K562 (cell line): ENCODE measurements at regions of chr3 and their contacts with region 1.

Region 1: DNA sequence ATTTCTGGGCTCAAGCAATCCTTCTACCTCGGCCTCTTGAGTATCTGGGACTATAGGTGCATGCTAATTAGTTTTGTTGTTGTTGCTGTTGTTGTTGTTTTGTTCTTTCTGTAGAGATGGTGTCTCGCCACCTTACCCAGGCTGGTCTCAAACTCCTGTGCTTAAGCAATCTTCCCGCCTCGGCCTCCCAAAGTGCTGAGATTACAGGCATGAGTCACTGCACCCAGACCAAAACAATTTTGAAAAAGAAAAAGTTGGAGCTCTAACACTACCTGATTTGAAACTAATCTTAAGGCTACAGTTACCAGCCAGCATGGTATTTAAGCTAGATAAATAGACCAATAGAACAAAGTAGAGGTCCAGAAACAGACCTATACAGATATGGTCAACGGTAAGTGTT is 29.8 kb downstream of the KPNA1 start:
- DNase-seq: peak in 1 of 4 experiments; percentile 25
- ATAC-seq: peak; percentile 58
- H3K4me3 ChIP-seq: no peak overlapping the region
- H3K27ac ChIP-seq: no peak overlapping the region
- H3K4me1 ChIP-seq: no peaks in the 10 kb centered on the region; a peak in 2 of 5 replicates
- H3K27me3 ChIP-seq: no peaks in the 10 kb centered on the region
- CTCF ChIP-seq: no peak
- EP300 ChIP-seq: no peak; the same call in 1 of the 2 replicates
- POLR2A ChIP-seq: no peak
- RAD21 ChIP-seq: no peak

Region 2: DNA sequence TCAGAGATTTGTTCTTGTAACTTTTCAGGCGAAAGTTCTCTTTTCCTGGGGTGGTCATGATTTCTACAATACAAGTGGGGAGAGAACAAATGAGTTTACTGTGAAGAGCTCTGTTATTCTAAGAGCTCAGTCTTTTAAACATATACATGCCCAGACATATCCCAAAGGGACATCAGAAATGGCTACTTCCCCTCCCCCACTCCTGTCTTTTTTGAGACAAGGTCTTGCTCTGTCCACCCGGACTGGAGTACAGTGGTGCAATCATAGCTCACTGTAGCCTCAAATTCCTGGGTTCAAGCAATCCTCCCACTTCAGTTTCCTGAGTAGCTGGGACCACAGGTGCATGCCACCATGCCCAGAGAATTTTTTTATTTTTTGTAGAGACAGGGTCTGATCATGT is 11.5 kb after region 1 on chr3:
- CTCF ChIA-PET with region 1: no interaction called
- POLR2A ChIA-PET with region 1: interaction called, 12 read pairs
- in situ Hi-C with region 1: no loop called
- intact Hi-C with region 1: no loop called
- DNase-seq: no peak
- ATAC-seq: no peak
- H3K4me3 ChIP-seq: no peak overlapping the region
- H3K27ac ChIP-seq: no peak overlapping the region
- H3K4me1 ChIP-seq: peaks cover 0 to 5% of the 10 kb centered on the region in 2 experiments; a peak in 3 of 5 replicates
- H3K27me3 ChIP-seq: no peaks in the 10 kb centered on the region
- CTCF ChIP-seq: no peak
- EP300 ChIP-seq: no peak
- POLR2A ChIP-seq: no peak
- RAD21 ChIP-seq: no peak

Region 3: DNA sequence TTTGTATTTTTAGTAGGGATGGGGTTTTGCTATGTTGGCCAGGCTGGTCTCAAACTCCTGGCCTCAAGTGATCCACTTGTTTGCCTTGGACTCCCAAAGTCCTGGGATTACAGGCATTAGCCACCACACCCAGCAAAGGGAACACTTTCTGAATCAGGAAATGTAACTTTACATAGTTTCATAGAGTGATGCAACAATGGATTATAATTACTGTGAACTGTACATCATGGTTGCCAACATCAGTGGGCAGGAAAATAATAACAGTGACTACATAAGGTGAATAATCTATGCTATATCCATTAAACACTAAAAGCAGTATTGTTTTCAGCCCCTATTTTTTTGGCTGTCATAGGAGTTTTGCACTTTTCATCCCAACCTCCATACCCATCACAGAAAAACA is 34.7 kb after region 1 on chr3:
- CTCF ChIA-PET with region 1: no interaction called
- POLR2A ChIA-PET with region 1: no interaction called
- in situ Hi-C with region 1: no loop called
- intact Hi-C with region 1: no loop called
- DNase-seq: no peak
- ATAC-seq: no peak
- H3K4me3 ChIP-seq: no peak overlapping the region
- H3K27ac ChIP-seq: no peak overlapping the region
- H3K4me1 ChIP-seq: peaks cover 2 to 3% of the 10 kb centered on the region in 2 experiments; a peak in 3 of 5 replicates
- H3K27me3 ChIP-seq: no peaks in the 10 kb centered on the region
- CTCF ChIP-seq: no peak
- EP300 ChIP-seq: no peak
- POLR2A ChIP-seq: no peak
- RAD21 ChIP-seq: no peak

Region 4: GRCh38 chr3:122952512-122952911 is 467.5 kb after region 1 on chr3:
- CTCF ChIA-PET with region 1: no interaction called
- POLR2A ChIA-PET with region 1: no interaction called
- in situ Hi-C with region 1: no loop called
- intact Hi-C with region 1: no loop called
- DNase-seq: no peak
- ATAC-seq: no peak
- H3K4me3 ChIP-seq: no peak overlapping the region
- H3K27ac ChIP-seq: no peak overlapping the region
- H3K4me1 ChIP-seq: no peaks in the 10 kb centered on the region
- H3K27me3 ChIP-seq: peaks cover 3 to 21% of the 10 kb centered on the region in 2 experiments; a peak in 3 of 5 replicates
- CTCF ChIP-seq: no peak
- EP300 ChIP-seq: no peak
- POLR2A ChIP-seq: no peak
- RAD21 ChIP-seq: no peak

Region 5: DNA sequence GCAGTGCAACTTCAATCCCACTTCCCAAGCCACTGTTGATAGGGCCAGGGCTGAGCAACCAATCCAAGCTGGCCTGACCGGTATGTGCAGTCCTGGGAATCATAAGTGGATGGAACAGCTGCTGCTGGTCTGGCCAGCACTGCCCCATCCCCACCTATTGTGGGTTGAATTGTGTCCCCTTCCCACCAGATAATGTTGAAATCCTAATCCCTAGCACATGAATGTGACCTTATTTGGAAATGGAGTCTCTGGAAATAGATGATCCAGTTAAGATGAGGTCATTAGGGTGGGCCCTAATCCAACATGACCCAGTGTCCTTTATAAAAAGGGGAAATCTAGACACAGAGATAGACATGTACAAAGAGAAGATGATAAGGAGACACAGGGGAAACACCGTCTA is 568.1 kb after region 1 on chr3:
- CTCF ChIA-PET with region 1: no interaction called
- POLR2A ChIA-PET with region 1: no interaction called
- in situ Hi-C with region 1: no loop called
- intact Hi-C with region 1: no loop called
- DNase-seq: no peak
- ATAC-seq: no peak
- H3K4me3 ChIP-seq: no peak overlapping the region
- H3K27ac ChIP-seq: no peak overlapping the region
- H3K4me1 ChIP-seq: no peaks in the 10 kb centered on the region; a peak in 1 of 5 replicates
- H3K27me3 ChIP-seq: peaks cover 0 to 4% of the 10 kb centered on the region in 2 experiments; a peak in 3 of 5 replicates
- CTCF ChIP-seq: no peak
- EP300 ChIP-seq: no peak
- POLR2A ChIP-seq: no peak
- RAD21 ChIP-seq: no peak